ENCODE measurements at regions of chr6 and their contacts with region 1.

Region 1: GRCh38 chr6:39980839-39981580 is 46.7 kb upstream of the MOCS1 start:
- DNase-seq: peak; percentile 71
- H3K4me3 ChIP-seq: no peak overlapping the region
- H3K27ac ChIP-seq: no peak overlapping the region
- H3K4me1 ChIP-seq: no peaks in the 10 kb centered on the region
- H3K27me3 ChIP-seq: no peaks in the 10 kb centered on the region
- CTCF ChIP-seq: peak; percentile 71

Region 2: GRCh38 chr6:39770446-39770845 is 210.6 kb before region 1 on chr6:
- CTCF ChIA-PET with region 1: no interaction called
- POLR2A ChIA-PET with region 1: no interaction called
- intact Hi-C with region 1: no loop called
- DNase-seq: no peak
- H3K4me3 ChIP-seq: no peak overlapping the region
- H3K27ac ChIP-seq: no peak overlapping the region
- H3K4me1 ChIP-seq: no peaks in the 10 kb centered on the region
- H3K27me3 ChIP-seq: no peaks in the 10 kb centered on the region
- CTCF ChIP-seq: no peak

Region 3: DNA sequence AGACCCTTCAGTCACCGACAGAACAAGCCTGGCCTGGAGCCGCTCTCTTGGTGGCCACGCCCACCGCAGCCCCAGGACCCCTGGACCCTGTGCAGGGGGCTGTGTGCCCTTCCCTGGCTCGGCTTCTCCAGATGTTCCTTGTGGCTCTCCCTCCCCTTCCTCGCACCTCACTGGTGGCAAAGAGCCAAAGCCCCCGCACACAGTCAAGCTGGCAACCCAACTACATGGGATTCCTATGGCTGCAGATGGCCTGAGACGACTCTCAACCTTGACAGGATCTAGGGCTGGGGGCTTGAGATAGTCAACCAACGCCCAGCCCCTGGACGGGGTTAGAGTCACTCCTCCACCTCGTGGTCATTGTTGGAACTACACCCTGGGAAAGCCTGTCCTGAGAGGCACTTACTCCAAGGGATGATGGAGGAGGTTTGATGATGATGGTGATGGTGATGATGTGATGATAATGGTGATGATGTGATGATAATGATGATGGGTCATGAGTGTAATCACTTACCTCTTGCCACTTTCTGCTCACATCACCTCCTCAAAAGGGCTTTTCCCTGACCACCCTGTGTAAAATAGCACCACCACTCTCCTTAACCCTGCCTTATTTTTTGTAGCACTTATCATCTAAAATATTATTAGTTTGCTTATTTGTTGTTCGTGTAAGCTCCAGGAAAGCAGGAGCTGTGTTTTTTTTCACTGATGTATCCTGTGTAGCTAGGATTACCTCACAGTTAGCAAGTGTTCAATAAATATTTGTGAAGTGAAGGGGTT is 327.7 kb after region 1 on chr6:
- CTCF ChIA-PET with region 1: no interaction called
- POLR2A ChIA-PET with region 1: no interaction called
- intact Hi-C with region 1: loop called (anchors 5 kb)
- DNase-seq: peak; percentile 83
- H3K4me3 ChIP-seq: no peak overlapping the region
- H3K27ac ChIP-seq: no peak overlapping the region
- H3K4me1 ChIP-seq: no peaks in the 10 kb centered on the region
- H3K27me3 ChIP-seq: no peaks in the 10 kb centered on the region
- CTCF ChIP-seq: peak; percentile 90

Region 4: DNA sequence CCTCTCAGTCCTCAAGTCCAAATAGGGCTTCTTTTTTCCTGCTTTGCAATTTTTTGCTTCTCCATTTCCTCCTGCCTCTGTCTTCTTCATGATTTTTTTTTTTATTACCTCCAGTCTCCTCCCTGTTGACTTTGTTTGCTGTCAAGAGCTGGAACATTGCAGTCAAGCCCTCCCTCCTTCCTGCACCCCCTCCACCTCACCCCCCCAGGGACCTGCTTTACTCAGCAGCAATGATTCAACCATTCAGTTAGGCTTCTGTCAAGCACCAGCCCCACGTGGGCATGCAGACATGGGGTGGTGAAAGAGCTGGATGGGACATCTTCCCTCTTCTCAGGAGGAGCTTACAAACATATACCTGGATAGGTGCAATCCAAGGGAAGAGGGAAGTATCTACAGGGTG is 463.8 kb after region 1 on chr6:
- CTCF ChIA-PET with region 1: no interaction called
- POLR2A ChIA-PET with region 1: no interaction called
- intact Hi-C with region 1: no loop called
- DNase-seq: peak; percentile 75
- H3K4me3 ChIP-seq: no peak overlapping the region
- H3K27ac ChIP-seq: peak overlapping the region; percentile 54
- H3K4me1 ChIP-seq: peaks cover 57% of the 10 kb centered on the region
- H3K27me3 ChIP-seq: no peaks in the 10 kb centered on the region
- CTCF ChIP-seq: no peak

Region 5: DNA sequence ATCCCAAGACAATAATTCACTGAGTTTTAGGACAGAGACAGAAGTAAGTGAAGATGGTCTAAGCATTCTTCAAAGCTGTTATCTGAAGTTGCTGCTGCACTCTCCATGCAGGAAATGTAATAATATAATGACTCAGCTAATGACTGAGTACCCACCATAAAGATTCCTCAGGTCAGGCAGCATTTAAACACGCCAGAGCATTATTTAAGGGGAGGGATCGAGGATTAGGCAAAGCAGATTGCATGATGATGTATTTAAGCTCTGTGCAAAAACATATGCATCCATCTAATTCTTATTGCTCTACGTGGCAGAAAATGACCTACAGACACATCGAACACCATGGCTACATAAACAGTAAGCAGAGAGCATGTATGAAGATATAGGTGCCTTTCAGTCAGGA is 841.6 kb after region 1 on chr6:
- CTCF ChIA-PET with region 1: no interaction called
- POLR2A ChIA-PET with region 1: no interaction called
- intact Hi-C with region 1: loop called (anchors 10 kb)
- DNase-seq: peak; percentile 86
- H3K4me3 ChIP-seq: no peak overlapping the region
- H3K27ac ChIP-seq: peak overlapping the region; percentile 68
- H3K4me1 ChIP-seq: peaks cover 41% of the 10 kb centered on the region
- H3K27me3 ChIP-seq: no peaks in the 10 kb centered on the region
- CTCF ChIP-seq: no peak

Region 6: GRCh38 chr6:41039060-41039998 is 1058.3 kb after region 1 on chr6 and contains the start of gene UNC5CL:
- CTCF ChIA-PET with region 1: interaction called, 3 read pairs
- POLR2A ChIA-PET with region 1: no interaction called
- intact Hi-C with region 1: loop called (anchors 5 kb)
- DNase-seq: peak; percentile 48
- H3K4me3 ChIP-seq: no peak within 1 kb of the TSS
- H3K27ac ChIP-seq: no peak within 1 kb of the TSS
- H3K4me1 ChIP-seq: no peaks in the 10 kb centered on the region
- H3K27me3 ChIP-seq: no peaks in the 10 kb centered on the region
- CTCF ChIP-seq: peak; percentile 93
- total RNA-seq, gene UNC5CL: 0.41 and 1.2 TPM in 2 replicates